Naive thymus-derived CD4-positive, alpha-beta T cell (primary cell): ENCODE measurements at regions of chr2 and their contacts with region 1.

Region 1: GRCh38 chr2:143259368-143259958 is 130.2 kb downstream of the ARHGAP15 start:
- DNase-seq: peak; percentile 25 to 76 (median 69)
- ATAC-seq: peak; percentile 63
- H3K4me3 ChIP-seq: peak overlapping the region; percentile 29
- H3K4me3 Mint-ChIP-seq: peak overlapping the region in 9 of 10 donors; percentile 77 to 90 (median 84)
- H3K27ac ChIP-seq: peak overlapping the region; percentile 49
- H3K27ac Mint-ChIP-seq: peak overlapping the region; percentile 51 to 98 (median 93)
- H3K4me1 ChIP-seq: peaks cover 68 to 75% of the 10 kb centered on the region in 2 donors
- H3K4me1 Mint-ChIP-seq: peaks cover 39 to 88% (median 84%) of the 10 kb centered on the region in 7 donors
- H3K27me3 ChIP-seq: no peaks in the 10 kb centered on the region
- H3K27me3 Mint-ChIP-seq: no peaks in the 10 kb centered on the region

Region 2: DNA sequence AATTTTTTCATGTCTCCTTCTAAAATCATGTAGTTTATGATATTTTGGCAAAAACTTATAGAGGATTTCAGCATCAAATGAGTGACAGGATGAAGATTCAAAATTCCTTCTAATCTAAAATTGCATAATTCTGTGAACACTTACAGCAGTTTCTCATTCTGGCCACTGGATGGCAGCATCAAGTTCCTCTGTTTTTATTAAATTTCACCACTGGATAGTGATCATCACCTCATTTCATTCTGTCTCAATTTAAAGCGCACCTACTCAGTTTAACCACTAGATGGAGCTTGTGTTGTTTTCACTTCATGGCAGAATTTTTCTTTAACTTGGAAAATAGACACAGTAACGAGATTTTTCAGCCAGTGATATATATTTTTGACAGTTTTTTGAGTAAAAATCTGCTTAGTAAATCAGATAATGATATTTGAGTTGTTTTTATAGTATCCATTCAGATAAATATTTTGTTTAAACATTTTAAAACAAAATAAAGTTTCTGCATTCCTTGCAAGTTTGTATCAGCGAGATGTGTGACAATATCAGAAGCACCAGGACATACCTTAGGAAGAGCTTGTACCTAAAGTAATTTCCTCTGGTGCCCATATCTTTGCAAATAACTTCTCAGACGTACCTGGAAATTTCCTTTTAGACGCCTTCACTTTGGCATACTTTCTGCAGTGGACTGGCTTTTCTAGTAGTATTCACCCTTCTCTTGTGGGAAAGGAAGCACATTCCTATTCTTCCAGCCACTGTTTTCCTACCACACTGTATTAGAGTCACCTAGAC is 225.0 kb before region 1 on chr2:
- CTCF ChIA-PET with region 1: interaction called, 14 read pairs
- POLR2A ChIA-PET with region 1: no interaction called
- intact Hi-C with region 1: loop called (anchors 1 kb)
- DNase-seq: peak in 7 of 9 donors; percentile 59 to 84 (median 75)
- ATAC-seq: peak; percentile 100
- H3K4me3 ChIP-seq: no peak overlapping the region
- H3K4me3 Mint-ChIP-seq: no peak overlapping the region
- H3K27ac ChIP-seq: no peak overlapping the region
- H3K27ac Mint-ChIP-seq: peak overlapping the region in 1 of 9 donors; percentile 15
- H3K4me1 ChIP-seq: no peaks in the 10 kb centered on the region
- H3K4me1 Mint-ChIP-seq: peaks cover 0 to 9% (median 0%) of the 10 kb centered on the region in 7 donors
- H3K27me3 ChIP-seq: no peaks in the 10 kb centered on the region
- H3K27me3 Mint-ChIP-seq: peaks cover 0 to 8% (median 0%) of the 10 kb centered on the region in 5 donors

Region 3: DNA sequence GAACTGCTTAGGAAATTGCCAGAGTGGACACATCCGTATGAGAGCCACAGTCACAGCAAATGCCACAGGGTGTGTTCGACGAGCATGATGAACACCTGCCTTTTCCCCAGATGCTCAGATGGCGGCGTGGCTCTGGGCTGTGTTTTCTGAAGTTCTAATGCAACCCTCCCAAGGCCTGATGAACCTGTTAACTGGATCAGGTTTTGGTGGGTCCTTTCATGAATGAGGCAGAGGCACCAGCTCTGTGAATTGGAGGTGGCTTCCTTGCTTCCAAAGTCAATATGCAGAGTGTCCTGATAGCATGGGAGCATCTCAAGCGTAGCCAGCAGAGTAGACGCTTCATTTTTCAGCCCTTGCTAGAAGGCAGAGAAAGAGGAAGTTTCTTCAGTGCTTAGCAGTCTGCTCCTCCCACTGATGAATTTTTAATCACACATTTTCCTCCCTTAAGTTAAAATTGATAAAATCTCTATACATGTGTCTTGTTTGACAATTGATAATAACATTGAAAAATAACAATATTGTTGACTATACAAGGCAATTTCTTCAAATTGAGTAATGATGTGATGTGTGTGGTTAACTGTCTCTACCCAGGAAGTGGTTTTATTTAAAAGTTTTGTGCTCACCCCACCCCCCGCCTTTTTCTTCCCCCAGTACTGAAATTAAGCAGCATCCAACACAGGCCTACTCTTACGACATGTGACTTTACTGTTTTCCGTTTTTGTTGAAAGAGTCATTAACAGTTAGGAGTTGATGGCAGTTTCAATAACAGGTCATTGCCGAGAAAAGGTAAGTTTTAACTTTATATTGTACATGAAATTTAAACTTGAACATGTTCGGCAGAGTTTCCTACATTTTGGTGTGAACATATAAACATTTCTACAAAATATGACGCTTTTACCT is 130.5 kb before region 1 on chr2 and contains the start of gene ARHGAP15:
- CTCF ChIA-PET with region 1: interaction called, 30 read pairs
- POLR2A ChIA-PET with region 1: interaction called, 21 read pairs
- intact Hi-C with region 1: loop called (anchors 1 kb)
- DNase-seq: peak; percentile 31 to 89 (median 83)
- ATAC-seq: peak; percentile 95
- H3K4me3 ChIP-seq: peak within 1 kb of the TSS; percentile 70
- H3K4me3 Mint-ChIP-seq: peak within 1 kb of the TSS; percentile 76 to 91 (median 82)
- H3K27ac ChIP-seq: peak within 1 kb of the TSS; percentile 84
- H3K27ac Mint-ChIP-seq: peak within 1 kb of the TSS in 5 of 9 donors; percentile 85 to 98 (median 98)
- H3K4me1 ChIP-seq: peaks cover 46 to 52% of the 10 kb centered on the region in 2 donors
- H3K4me1 Mint-ChIP-seq: peaks cover 20 to 39% (median 33%) of the 10 kb centered on the region in 7 donors
- H3K27me3 ChIP-seq: no peaks in the 10 kb centered on the region
- H3K27me3 Mint-ChIP-seq: no peaks in the 10 kb centered on the region
- total RNA-seq, gene ARHGAP15: 164 to 218 (median 183) TPM

Region 4: DNA sequence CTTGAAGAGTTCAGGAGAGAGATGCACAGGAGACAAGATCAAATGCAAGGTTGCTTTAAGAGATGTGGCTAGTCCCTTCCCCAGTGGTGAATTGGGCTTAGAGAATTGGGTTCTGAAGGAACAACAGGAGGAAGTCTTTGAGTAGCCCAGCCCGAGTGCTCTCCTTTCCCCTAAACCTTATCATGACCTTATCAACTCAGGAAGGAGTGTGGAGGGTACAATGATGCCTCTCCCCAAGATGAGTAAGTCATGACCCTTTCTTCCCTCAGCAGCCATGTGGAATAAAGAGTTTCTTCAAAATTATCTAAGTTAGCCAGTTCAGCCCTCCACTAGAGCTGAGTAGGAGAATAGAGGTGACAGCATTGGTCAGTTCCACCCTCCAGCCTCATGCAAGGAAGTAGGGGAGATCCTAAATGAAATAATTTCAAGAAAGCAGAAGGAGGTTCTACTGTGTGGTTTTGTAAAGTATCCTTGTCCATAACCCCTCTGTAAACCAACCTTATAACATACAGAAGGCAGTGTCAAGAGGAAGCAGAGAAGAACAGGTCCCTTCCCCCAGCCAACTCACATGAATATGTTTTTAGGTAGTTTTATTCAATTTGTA is 41.8 kb before region 1 on chr2:
- CTCF ChIA-PET with region 1: interaction called, 44 read pairs
- POLR2A ChIA-PET with region 1: interaction called, 3 read pairs
- intact Hi-C with region 1: loop called (anchors 1 kb)
- DNase-seq: no peak
- ATAC-seq: peak; percentile 75
- H3K4me3 ChIP-seq: no peak overlapping the region
- H3K4me3 Mint-ChIP-seq: peak overlapping the region in 3 of 10 donors; percentile 10 to 31 (median 25)
- H3K27ac ChIP-seq: no peak overlapping the region
- H3K27ac Mint-ChIP-seq: peak overlapping the region; percentile 17 to 85 (median 53)
- H3K4me1 ChIP-seq: peaks cover 4 to 5% of the 10 kb centered on the region in 2 donors
- H3K4me1 Mint-ChIP-seq: peaks cover 29 to 81% (median 67%) of the 10 kb centered on the region in 7 donors
- H3K27me3 ChIP-seq: no peaks in the 10 kb centered on the region
- H3K27me3 Mint-ChIP-seq: no peaks in the 10 kb centered on the region

Region 5: DNA sequence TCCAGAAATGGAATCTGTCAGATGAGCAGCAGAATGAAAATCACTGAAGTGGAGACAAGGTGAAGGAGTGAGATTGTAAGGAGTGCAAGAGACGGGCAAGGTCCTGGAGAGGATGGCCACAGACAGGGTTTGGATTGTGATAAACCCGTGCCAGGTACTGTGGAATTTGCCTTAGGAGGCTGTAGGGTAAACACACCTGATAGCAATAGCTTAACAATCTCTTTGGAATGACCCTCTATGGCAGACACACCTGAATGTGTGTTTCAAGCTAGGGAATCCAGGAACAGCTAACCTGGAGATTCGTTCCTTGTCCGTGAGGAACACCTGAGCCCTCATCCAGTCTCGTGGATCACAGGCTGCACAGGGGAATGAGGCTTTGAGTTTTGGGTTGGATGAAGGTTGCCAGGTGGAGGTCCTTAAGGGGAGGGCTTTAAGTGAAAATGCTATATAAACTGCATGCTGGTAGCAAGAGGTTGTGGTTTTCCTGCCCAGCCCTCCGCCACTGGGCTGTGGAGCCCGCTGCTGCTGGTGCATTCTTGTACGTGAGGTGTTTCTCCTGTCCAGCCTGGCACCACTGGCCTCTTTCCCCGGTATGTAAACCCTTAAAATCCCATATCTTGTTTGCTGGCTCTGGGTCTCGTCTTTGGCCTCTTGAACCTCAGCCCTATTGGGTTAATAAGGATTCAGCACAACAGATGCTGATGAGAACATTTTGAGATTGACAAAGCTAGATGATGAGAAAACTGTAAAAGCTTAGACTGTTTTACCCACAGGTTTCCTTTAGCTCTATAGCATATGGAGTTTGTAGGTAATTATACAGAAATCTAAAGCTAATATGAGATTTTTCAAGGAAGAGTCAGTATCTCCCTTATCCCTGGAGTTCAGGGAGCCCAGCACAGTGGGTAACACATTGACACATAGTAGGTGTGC is 12.4 kb before region 1 on chr2:
- CTCF ChIA-PET with region 1: interaction called, 26 read pairs
- POLR2A ChIA-PET with region 1: interaction called, 7 read pairs
- intact Hi-C with region 1: loop called in 1 of 2 experiments (anchors 1 kb)
- DNase-seq: peak in 2 of 9 donors; percentile 25 to 36
- ATAC-seq: peak; percentile 73
- H3K4me3 ChIP-seq: peak overlapping the region; percentile 46
- H3K4me3 Mint-ChIP-seq: peak overlapping the region in 2 of 10 donors; percentile 25 to 71
- H3K27ac ChIP-seq: peak overlapping the region; percentile 53
- H3K27ac Mint-ChIP-seq: peak overlapping the region in 2 of 9 donors; percentile 92
- H3K4me1 ChIP-seq: peaks cover 22 to 32% of the 10 kb centered on the region in 2 donors
- H3K4me1 Mint-ChIP-seq: peaks cover 11 to 43% (median 22%) of the 10 kb centered on the region in 7 donors
- H3K27me3 ChIP-seq: no peaks in the 10 kb centered on the region
- H3K27me3 Mint-ChIP-seq: no peaks in the 10 kb centered on the region

Region 6: DNA sequence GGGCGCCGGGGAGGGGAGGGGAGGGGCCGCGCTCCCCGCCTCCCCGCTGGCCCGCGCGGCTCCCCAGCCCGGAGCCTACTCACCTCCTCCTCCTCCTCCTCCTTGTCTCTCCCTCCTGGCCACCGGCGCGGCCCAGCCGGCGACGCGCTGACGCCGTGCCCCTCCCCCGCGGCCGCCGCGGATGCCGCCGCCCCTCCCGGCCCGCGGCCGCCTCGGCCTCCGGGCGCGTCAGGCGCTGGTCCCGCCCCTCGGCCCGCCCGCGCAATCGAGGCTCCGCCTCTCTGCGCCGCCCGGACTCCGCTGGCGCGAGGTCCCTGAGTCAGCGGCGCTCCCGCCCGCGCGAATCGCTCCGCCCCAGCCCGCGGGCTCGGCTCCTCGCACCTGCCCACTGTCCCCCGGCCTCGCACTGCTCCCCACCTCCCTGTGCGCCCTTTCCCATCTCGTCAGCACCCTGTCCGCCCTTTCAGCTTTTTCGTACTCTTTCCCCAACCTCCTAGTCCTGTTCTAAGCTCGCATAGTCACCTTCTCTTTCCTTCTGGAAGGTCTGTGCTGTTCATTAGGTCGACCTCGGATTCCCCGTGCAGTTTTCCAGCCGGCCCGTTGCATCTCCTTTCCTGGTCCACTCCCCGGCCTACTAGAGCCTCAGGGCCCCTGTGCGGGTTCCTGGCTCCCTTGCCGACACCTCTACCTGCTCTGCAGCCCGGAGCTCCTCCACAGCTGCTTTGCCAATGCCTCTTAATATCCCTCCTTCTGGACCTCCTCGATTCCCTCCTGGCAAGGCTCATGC is 1073.1 kb after region 1 on chr2:
- CTCF ChIA-PET with region 1: no interaction called
- POLR2A ChIA-PET with region 1: no interaction called
- intact Hi-C with region 1: loop called (anchors 2 to 5 kb)
- DNase-seq: peak; percentile 65 to 97 (median 85)
- ATAC-seq: peak; percentile 95
- H3K4me3 ChIP-seq: peak overlapping the region; percentile 75
- H3K4me3 Mint-ChIP-seq: peak overlapping the region; percentile 91 to 96 (median 93)
- H3K27ac ChIP-seq: peak overlapping the region; percentile 64
- H3K27ac Mint-ChIP-seq: peak overlapping the region; percentile 54 to 91 (median 87)
- H3K4me1 ChIP-seq: peaks cover 5 to 26% of the 10 kb centered on the region in 2 donors
- H3K4me1 Mint-ChIP-seq: peaks cover 7 to 31% (median 13%) of the 10 kb centered on the region in 7 donors
- H3K27me3 ChIP-seq: no peaks in the 10 kb centered on the region
- H3K27me3 Mint-ChIP-seq: peaks cover 0 to 6% (median 0%) of the 10 kb centered on the region in 5 donors